AG04449 (cell line): ENCODE measurements at regions of chr11 and their contacts with region 1.

Region 1: GRCh38 chr11:34512840-34513681 is 533 bp downstream of the ELF5 start:
- DNase-seq: no peak
- H3K4me3 ChIP-seq: no peak overlapping the region
- CTCF ChIP-seq: peak; percentile 89

Region 2: DNA sequence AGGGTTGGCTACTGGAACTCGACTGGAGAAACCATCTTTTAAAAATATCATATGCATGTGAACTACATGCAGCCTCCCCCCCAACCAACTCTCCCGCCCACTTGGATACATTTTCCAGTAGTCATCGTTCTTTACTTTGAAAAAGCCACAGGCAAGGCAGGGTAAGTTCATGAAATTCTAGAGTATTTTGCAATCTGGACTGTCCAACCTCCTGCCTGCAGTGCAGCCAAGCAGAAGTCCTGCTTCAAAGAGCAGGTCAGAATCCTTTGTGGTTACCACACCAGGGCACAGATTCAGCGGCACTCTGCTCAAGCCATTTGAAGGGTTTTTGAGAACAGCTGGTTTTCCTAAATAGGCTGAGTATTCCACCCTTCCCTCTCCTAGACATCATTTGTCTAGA is 11.6 kb before region 1 on chr11:
- CTCF ChIA-PET with region 1: interaction called, 33 read pairs
- POLR2A ChIA-PET with region 1: no interaction called
- DNase-seq: peak; percentile 49
- H3K4me3 ChIP-seq: no peak overlapping the region
- CTCF ChIP-seq: no peak

Region 3: GRCh38 chr11:34899633-34900016 is 386.6 kb after region 1 on chr11:
- CTCF ChIA-PET with region 1: interaction called, 17 read pairs
- POLR2A ChIA-PET with region 1: no interaction called
- DNase-seq: no peak
- H3K4me3 ChIP-seq: no peak overlapping the region
- CTCF ChIP-seq: no peak